Breast epithelium (tissue), 4 donors: ENCODE measurements at regions of chr19 and their contacts with region 1.

Region 1: DNA sequence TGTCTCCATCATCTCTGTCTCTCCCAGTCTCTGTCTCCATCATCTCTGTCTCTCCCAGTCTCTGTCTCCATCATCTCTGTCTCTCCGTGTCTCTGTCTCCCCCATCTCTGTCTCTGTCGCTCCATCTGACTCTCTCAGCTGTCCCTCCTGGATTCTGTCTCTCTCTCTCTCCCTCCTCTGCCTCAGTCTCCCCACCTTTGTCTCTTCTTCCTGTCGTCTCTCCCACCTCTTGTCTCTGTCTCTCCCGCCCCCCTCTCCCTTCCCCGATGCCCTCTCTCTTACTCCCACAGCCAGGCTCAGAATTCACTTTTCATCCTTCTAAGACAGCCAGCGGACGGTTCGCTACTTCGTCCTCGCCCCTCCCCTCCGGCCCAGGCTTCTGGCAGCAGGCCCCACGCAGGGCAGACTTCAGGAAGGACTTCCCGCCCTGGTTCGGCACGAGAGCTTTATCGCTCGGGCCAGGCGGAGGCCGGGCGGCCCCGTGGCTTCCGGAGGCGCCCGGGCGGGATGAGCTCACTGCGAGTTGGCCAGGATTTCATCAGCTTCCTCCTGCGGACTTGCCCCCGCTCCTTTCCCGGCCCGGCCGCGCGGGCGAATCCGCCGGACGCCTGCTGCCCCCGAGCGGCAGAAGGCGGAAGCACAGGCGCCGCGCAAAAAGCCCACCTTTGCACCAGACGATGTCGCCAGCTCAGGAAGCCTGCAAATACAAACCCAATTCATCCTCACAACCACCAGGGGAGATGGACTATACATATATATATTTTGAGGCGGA is 12.4 kb upstream of the CCDC9 start:
- DNase-seq: peak; percentile 89
- H3K4me3 ChIP-seq: peak overlapping the region; percentile 10 to 61 (median 43)
- H3K27ac ChIP-seq: peak overlapping the region; percentile 48 to 68
- H3K4me1 ChIP-seq: peaks cover 0 to 20% of the 10 kb centered on the region in 2 donors
- H3K27me3 ChIP-seq: no peaks in the 10 kb centered on the region
- CTCF ChIP-seq: peak; percentile 99 to 100 (median 99)
- POLR2A ChIP-seq: no peak

Region 2: DNA sequence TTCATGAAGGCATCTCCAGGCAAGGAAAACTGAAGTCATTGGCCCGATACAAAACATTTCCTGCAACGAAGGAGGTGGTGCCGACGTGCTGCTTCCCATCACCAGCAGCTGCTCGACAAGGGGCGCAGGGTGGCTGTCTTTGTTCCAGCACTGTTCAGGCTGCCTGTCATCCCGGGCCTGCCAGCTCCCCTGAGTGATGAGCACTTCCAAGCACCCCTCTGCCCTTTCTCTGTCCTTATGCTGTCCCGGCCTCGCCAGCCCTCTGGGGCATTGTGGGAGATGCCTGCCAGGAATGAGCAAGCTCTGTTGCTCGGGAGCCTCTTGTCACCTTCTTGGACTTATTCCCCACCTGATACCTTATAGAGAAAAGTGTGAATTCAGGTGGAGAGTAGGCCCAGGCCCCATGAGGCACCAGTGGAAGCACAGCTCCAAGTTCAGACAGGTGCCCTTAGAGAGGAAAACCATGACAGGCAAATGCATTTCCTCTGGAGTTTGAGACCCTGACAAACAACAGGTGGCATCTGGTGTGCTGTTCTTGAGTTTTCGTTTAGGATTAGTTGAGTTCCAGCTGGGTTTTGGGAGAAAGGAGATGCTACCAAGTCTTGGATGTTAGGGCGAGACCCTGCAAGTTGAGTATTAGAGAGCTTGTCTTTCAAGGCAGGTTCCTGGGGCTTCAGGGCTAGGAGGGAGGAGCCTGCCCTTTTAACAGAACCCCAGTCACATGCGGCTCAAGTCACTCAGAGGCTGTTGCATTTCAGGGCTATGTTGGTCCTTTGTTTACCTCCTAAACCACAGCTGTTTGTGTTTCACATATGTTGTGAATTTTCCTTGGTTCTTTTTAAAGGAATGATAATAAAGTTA is 34.4 kb before region 1 on chr19:
- intact Hi-C with region 1: loop called (anchors 1 kb)
- DNase-seq: no peak
- H3K4me3 ChIP-seq: no peak overlapping the region
- H3K27ac ChIP-seq: no peak overlapping the region
- H3K4me1 ChIP-seq: no peaks in the 10 kb centered on the region
- H3K27me3 ChIP-seq: no peaks in the 10 kb centered on the region
- CTCF ChIP-seq: no peak
- POLR2A ChIP-seq: no peak

Region 3: GRCh38 chr19:47232422-47233211 is 11.3 kb before region 1 on chr19:
- intact Hi-C with region 1: loop called (anchors 1 kb)
- DNase-seq: peak in 1 of 2 donors; percentile 67
- H3K4me3 ChIP-seq: peak overlapping the region; percentile 26 to 99 (median 98)
- H3K27ac ChIP-seq: peak overlapping the region; percentile 99 to 100
- H3K4me1 ChIP-seq: peaks cover 0 to 7% of the 10 kb centered on the region in 2 donors
- H3K27me3 ChIP-seq: no peaks in the 10 kb centered on the region
- CTCF ChIP-seq: no peak
- POLR2A ChIP-seq: no peak

Region 4: GRCh38 chr19:48006762-48007161 is 762.8 kb after region 1 on chr19:
- intact Hi-C with region 1: no loop called
- DNase-seq: no peak
- H3K4me3 ChIP-seq: no peak overlapping the region
- H3K27ac ChIP-seq: no peak overlapping the region
- H3K4me1 ChIP-seq: no peaks in the 10 kb centered on the region
- H3K27me3 ChIP-seq: peaks cover 0 to 7% of the 10 kb centered on the region in 2 donors
- CTCF ChIP-seq: no peak
- POLR2A ChIP-seq: no peak